Natural killer cell (primary cell): ENCODE measurements at regions of chr7 and their contacts with region 1.

Region 1: DNA sequence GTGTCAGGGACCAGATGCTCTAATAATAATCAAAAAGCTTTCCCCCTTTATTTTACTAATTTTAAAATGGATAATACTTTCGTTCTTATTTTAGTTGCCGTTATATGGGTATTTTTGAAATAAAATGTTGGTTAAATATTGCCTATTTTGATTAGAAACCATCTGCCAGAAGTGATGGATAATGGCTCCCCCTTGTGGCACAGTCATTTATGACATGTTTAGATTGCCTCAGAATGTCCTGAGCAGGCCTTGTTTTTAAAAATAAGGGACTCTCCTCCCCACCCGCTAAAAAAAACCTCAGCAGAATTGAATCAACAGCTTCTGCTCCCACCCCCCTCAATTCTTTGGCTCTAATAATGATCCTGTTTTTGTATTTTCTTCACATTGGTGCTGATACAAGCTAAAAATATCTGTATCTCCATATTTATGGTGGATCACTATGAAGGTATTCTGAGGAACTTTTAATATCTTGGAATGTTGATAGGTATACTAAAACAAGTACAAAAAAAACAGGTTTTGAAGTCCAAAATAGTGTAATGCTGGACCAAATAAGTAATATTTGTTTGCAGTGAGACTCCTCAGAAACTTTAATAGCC is 38.8 kb downstream of the TMEM60 start:
- DNase-seq: peak; percentile 42 to 91
- ATAC-seq: peak; percentile 82 to 94 (median 83)
- H3K4me3 ChIP-seq: no peak overlapping the region
- H3K4me3 Mint-ChIP-seq: no peak overlapping the region
- H3K27ac ChIP-seq: no peak overlapping the region
- H3K27ac Mint-ChIP-seq: peak overlapping the region; percentile 66 to 77
- H3K4me1 ChIP-seq: no peaks in the 10 kb centered on the region
- H3K4me1 Mint-ChIP-seq: peaks cover 30 to 37% of the 10 kb centered on the region in 2 donors
- H3K27me3 ChIP-seq: no peaks in the 10 kb centered on the region
- H3K27me3 Mint-ChIP-seq: no peaks in the 10 kb centered on the region
- CTCF ChIP-seq: peak; percentile 90

Region 2: GRCh38 chr7:77651573-77652162 is 107.7 kb before region 1 on chr7:
- intact Hi-C with region 1: loop called (anchors 1 kb)
- DNase-seq: peak in 1 of 2 donors; percentile 71
- ATAC-seq: peak in 2 of 3 donors; percentile 38 to 44
- H3K4me3 ChIP-seq: no peak overlapping the region
- H3K4me3 Mint-ChIP-seq: no peak overlapping the region
- H3K27ac ChIP-seq: no peak overlapping the region
- H3K27ac Mint-ChIP-seq: peak overlapping the region; percentile 27 to 69
- H3K4me1 ChIP-seq: no peaks in the 10 kb centered on the region
- H3K4me1 Mint-ChIP-seq: peaks cover 0 to 6% of the 10 kb centered on the region in 2 donors
- H3K27me3 ChIP-seq: no peaks in the 10 kb centered on the region
- H3K27me3 Mint-ChIP-seq: no peaks in the 10 kb centered on the region
- CTCF ChIP-seq: peak; percentile 74

Region 3: GRCh38 chr7:77657427-77658224 is 101.8 kb before region 1 on chr7:
- intact Hi-C with region 1: loop called (anchors 1 kb)
- DNase-seq: peak in 1 of 2 donors; percentile 68
- ATAC-seq: peak in 2 of 3 donors; percentile 50 to 53
- H3K4me3 ChIP-seq: no peak overlapping the region
- H3K4me3 Mint-ChIP-seq: no peak overlapping the region
- H3K27ac ChIP-seq: no peak overlapping the region
- H3K27ac Mint-ChIP-seq: peak overlapping the region in 1 of 2 donors; percentile 74
- H3K4me1 ChIP-seq: no peaks in the 10 kb centered on the region
- H3K4me1 Mint-ChIP-seq: peaks cover 2 to 6% of the 10 kb centered on the region in 2 donors
- H3K27me3 ChIP-seq: no peaks in the 10 kb centered on the region
- H3K27me3 Mint-ChIP-seq: no peaks in the 10 kb centered on the region
- CTCF ChIP-seq: peak; percentile 54

Region 4: GRCh38 chr7:77696198-77697028 is 63.0 kb before region 1 on chr7 and contains the start of gene RSBN1L:
- intact Hi-C with region 1: loop called (anchors 5 kb)
- DNase-seq: peak; percentile 97 to 99
- ATAC-seq: peak; percentile 93 to 99 (median 95)
- H3K4me3 ChIP-seq: peak within 1 kb of the TSS; percentile 84
- H3K4me3 Mint-ChIP-seq: peak within 1 kb of the TSS; percentile 99
- H3K27ac ChIP-seq: peak within 1 kb of the TSS; percentile 85
- H3K27ac Mint-ChIP-seq: peak within 1 kb of the TSS; percentile 96 to 97
- H3K4me1 ChIP-seq: peaks cover 15% of the 10 kb centered on the region
- H3K4me1 Mint-ChIP-seq: peaks cover 55 to 57% of the 10 kb centered on the region in 2 donors
- H3K27me3 ChIP-seq: no peaks in the 10 kb centered on the region
- H3K27me3 Mint-ChIP-seq: no peaks in the 10 kb centered on the region
- CTCF ChIP-seq: peak; percentile 53
- total RNA-seq, gene RSBN1L: 23.9 to 34.4 (median 33.4) TPM